ENCODE measurements at regions of chr13 and their contacts with region 1.

Region 1: GRCh38 chr13:51729866-51730546 is 74.0 kb downstream of the DHRS12 start:
- DNase-seq: no peak
- H3K4me3 ChIP-seq: no peak overlapping the region
- H3K27ac ChIP-seq: peak overlapping the region in 1 of 2 donors; percentile 54
- H3K4me1 ChIP-seq: no peaks in the 10 kb centered on the region
- H3K27me3 ChIP-seq: no peaks in the 10 kb centered on the region
- CTCF ChIP-seq: no peak
- POLR2A ChIP-seq: no peak

Region 2: GRCh38 chr13:51230477-51231105 is 499.4 kb before region 1 on chr13:
- intact Hi-C with region 1: loop called (anchors 10 kb)
- DNase-seq: peak; percentile 27
- H3K4me3 ChIP-seq: no peak overlapping the region
- H3K27ac ChIP-seq: peak overlapping the region in 1 of 2 donors; percentile 32
- H3K4me1 ChIP-seq: peaks cover 6% of the 10 kb centered on the region
- H3K27me3 ChIP-seq: no peaks in the 10 kb centered on the region
- CTCF ChIP-seq: no peak
- POLR2A ChIP-seq: no peak

Region 3: GRCh38 chr13:51286135-51287002 is 443.6 kb before region 1 on chr13:
- intact Hi-C with region 1: loop called (anchors 10 kb)
- DNase-seq: peak; percentile 84
- H3K4me3 ChIP-seq: no peak overlapping the region
- H3K27ac ChIP-seq: no peak overlapping the region
- H3K4me1 ChIP-seq: no peaks in the 10 kb centered on the region
- H3K27me3 ChIP-seq: no peaks in the 10 kb centered on the region
- CTCF ChIP-seq: peak; percentile 83 to 99 (median 90)
- POLR2A ChIP-seq: no peak

Region 4: DNA sequence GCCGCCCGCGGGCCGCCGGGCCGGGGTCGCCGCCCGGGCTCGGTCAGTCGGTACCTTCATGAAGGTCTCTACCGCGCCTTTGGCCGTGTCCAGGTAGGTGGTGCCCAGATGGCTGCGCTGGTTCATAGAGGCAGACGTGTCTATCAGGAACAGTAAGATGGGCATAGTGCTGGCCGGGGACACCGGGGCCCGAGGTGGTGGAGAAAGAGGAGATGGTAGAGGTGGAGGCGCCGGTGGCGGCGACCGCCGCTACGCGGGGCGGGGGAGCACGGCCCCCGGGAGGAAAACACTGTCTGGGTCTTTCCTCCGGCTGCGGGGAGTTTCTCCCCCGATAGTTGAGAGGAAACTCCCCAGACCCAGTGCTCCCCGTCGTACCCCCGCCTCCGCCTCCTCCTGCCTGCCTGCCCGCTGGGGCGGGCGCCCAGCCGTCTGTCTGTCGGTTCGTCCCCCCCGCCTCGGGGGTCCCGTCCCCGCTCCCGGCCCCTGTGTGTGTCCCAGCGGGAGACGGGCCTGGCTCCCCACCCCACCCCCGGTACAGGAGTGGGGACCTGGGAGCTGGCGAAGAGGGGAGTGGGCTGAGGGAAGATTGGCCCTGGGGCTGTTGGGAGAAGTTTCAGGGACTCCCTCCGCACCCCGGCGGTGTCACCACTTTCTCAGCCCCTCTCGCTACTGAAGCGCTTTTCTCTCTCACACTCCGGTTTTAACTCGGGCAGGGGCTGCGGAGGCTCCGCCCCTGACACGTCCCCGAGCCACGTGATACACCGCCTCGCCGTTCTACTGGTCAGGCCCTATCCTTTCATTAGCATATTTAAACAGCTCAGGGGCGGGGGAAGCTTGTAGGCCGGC is 277.4 kb before region 1 on chr13 and contains the start of gene INTS6:
- intact Hi-C with region 1: loop called (anchors 5 kb)
- DNase-seq: peak; percentile 100
- H3K4me3 ChIP-seq: peak within 1 kb of the TSS; percentile 92 to 93
- H3K27ac ChIP-seq: peak within 1 kb of the TSS; percentile 99 to 100
- H3K4me1 ChIP-seq: no peaks in the 10 kb centered on the region
- H3K27me3 ChIP-seq: no peaks in the 10 kb centered on the region
- CTCF ChIP-seq: no peak
- POLR2A ChIP-seq: peak; percentile 100
- total RNA-seq, gene INTS6: 37.4 to 59.0 TPM

Region 5: GRCh38 chr13:51583875-51584730 is 145.9 kb before region 1 on chr13 and contains the start of gene WDFY2:
- intact Hi-C with region 1: loop called (anchors 5 kb)
- DNase-seq: peak; percentile 100
- H3K4me3 ChIP-seq: peak within 1 kb of the TSS; percentile 83 to 90
- H3K27ac ChIP-seq: peak within 1 kb of the TSS; percentile 91 to 92
- H3K4me1 ChIP-seq: no peaks in the 10 kb centered on the region
- H3K27me3 ChIP-seq: no peaks in the 10 kb centered on the region
- CTCF ChIP-seq: peak in 2 of 4 experiments; percentile 25 to 34
- POLR2A ChIP-seq: peak; percentile 97
- total RNA-seq, gene WDFY2: 7.9 to 23.2 TPM